PC-9 (cell line): ENCODE measurements at regions of chr3 and their contacts with region 1.

Region 1: GRCh38 chr3:194141415-194142155 is 5.6 kb downstream of the HES1 start:
- DNase-seq: peak; percentile 97
- H3K4me3 ChIP-seq: peak overlapping the region; percentile 46; the same call in 1 of the 2 replicates
- H3K27ac ChIP-seq: peak overlapping the region; percentile 99
- H3K4me1 ChIP-seq: peaks cover 65% of the 10 kb centered on the region
- H3K27me3 ChIP-seq: no peaks in the 10 kb centered on the region
- CTCF ChIP-seq: 0 out of 2 replicates have a peak, but pooled peaks have one; percentile 37

Region 2: GRCh38 chr3:193883551-193883950 is 258.0 kb before region 1 on chr3:
- CTCF ChIA-PET with region 1: no interaction called
- POLR2A ChIA-PET with region 1: interaction called, 12 read pairs
- intact Hi-C with region 1: loop called (anchors 1 kb)
- DNase-seq: peak; percentile 58 to 85
- H3K4me3 ChIP-seq: no peak overlapping the region
- H3K27ac ChIP-seq: peak overlapping the region; percentile 81
- H3K4me1 ChIP-seq: peaks cover 88% of the 10 kb centered on the region
- H3K27me3 ChIP-seq: no peaks in the 10 kb centered on the region
- CTCF ChIP-seq: no peak

Region 3: DNA sequence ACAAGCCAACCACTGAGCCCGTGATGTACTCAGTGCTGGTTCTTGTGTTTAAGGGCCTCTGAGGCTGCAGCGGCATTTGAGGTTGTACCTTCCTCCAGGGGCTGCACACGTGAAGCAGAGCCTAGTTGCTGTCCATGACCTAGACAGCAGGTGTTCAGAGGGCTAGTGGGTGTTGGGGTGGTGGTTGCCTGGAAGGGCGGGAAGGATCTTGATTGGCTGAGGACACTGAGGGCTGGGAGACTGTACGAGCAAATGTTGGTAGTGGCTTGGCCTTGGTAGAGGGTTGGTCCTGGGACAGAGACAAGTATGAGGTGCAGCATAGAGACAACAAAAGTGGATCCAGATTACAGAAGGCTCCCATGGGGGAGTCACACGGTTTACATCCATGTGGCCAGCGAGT is 22.7 kb before region 1 on chr3:
- CTCF ChIA-PET with region 1: no interaction called
- POLR2A ChIA-PET with region 1: no interaction called
- intact Hi-C with region 1: no loop called
- DNase-seq: no peak
- H3K4me3 ChIP-seq: no peak overlapping the region
- H3K27ac ChIP-seq: no peak overlapping the region
- H3K4me1 ChIP-seq: peaks cover 28% of the 10 kb centered on the region
- H3K27me3 ChIP-seq: no peaks in the 10 kb centered on the region
- CTCF ChIP-seq: no peak

Region 4: DNA sequence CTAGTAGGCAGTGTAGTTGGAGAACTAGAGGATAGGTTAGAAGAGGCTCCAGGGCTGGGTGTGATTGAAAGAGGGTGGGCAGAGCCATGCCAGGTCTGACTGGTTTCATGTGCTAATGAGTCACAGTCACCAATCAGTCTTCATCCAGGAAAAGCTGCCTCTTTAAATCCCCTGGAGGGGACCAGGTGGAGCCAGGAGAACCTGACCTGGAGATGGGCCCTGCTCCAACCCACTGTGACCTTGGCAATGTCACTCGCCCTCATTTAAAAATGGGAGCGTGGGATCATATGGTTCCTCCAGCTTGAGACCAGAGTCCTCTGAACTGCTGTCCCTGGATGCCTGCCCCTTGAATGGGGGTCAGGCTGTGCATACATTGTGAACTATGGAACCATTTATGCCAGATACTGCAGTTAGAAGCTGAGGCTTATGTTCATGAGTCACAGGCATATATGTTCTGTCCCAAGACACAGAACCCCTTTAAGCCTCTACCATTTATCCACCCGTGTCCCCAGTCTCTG is 17.4 kb after region 1 on chr3:
- CTCF ChIA-PET with region 1: no interaction called
- POLR2A ChIA-PET with region 1: interaction called, 6 read pairs
- intact Hi-C with region 1: loop called (anchors 1 kb)
- DNase-seq: peak; percentile 86 to 98
- H3K4me3 ChIP-seq: no peak overlapping the region; the same call in 1 of the 2 replicates
- H3K27ac ChIP-seq: peak overlapping the region; percentile 86
- H3K4me1 ChIP-seq: peaks cover 57% of the 10 kb centered on the region
- H3K27me3 ChIP-seq: no peaks in the 10 kb centered on the region
- CTCF ChIP-seq: no peak

Region 5: DNA sequence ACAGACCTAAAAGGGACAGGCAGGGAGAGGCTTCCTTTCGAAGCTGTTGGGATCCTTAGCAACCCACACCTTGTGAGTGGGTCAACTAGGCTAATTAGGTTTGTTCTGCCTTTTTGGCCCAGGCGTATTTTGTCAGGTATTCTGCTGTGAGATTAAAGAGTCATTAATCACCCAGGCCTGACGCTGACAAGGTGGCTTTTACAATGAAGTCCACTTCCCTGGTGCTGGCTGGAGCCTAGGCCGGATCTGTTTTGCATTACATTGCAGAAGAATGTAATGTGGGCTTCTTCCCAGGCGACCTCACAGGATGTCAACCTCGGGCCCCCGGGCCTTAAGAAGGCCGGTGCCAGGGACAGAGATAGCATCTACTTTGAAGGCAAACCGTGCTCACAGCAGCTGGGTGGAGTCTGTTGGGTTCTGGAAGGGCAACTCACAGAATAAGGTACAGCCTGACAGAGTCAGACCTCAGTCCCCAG is 71.3 kb after region 1 on chr3:
- CTCF ChIA-PET with region 1: no interaction called
- POLR2A ChIA-PET with region 1: interaction called, 3 read pairs
- intact Hi-C with region 1: loop called (anchors 1 kb)
- DNase-seq: peak; percentile 93 to 97
- H3K4me3 ChIP-seq: no peak overlapping the region
- H3K27ac ChIP-seq: peak overlapping the region; percentile 49
- H3K4me1 ChIP-seq: peaks cover 27% of the 10 kb centered on the region
- H3K27me3 ChIP-seq: no peaks in the 10 kb centered on the region
- CTCF ChIP-seq: no peak

Region 6: GRCh38 chr3:194306109-194306686 is 164.6 kb after region 1 on chr3:
- CTCF ChIA-PET with region 1: no interaction called
- POLR2A ChIA-PET with region 1: interaction called, 13 read pairs
- intact Hi-C with region 1: no loop called
- DNase-seq: no peak
- H3K4me3 ChIP-seq: no peak overlapping the region
- H3K27ac ChIP-seq: no peak overlapping the region
- H3K4me1 ChIP-seq: peaks cover 7% of the 10 kb centered on the region; the same call in 1 of the 2 replicates
- H3K27me3 ChIP-seq: no peaks in the 10 kb centered on the region
- CTCF ChIP-seq: no peak